ENCODE measurements at regions of chr1 and their contacts with region 1.

Region 1: DNA sequence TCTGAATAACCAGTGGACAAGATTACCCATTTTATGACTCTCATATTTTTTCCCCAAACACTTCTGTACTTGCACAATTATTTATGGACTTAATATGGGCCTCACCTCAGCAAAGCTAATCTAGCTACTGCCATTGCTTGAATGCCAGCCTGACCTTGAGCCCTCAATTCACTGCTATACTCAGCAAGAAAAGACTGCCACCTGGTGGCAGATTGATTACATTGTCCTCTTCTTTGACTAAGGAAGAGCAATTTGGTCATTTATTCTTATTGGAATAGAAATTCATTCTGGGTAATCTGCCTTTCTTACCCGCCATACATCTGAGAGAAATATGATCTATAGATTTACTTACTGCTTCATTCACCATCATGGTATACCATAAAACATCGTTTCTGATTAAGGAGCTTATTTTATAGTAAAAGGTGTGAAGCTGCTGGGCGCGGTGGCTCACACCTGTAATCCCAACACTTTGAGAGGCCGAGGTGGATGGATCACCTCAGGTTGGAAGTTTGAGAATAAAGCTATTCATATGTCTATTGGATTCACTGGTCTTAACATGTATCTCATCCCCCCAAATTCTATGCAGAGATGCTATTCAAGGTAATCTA is 32.9 kb upstream of the DIPK1A start:
- DNase-seq: peak; percentile 78 to 84 (median 80)
- H3K4me3 ChIP-seq: no peak overlapping the region
- H3K4me3 Mint-ChIP-seq: peak overlapping the region in 1 of 8 donors; percentile 80
- H3K27ac ChIP-seq: no peak overlapping the region
- H3K27ac Mint-ChIP-seq: peak overlapping the region; percentile 52 to 88 (median 77)
- H3K4me1 ChIP-seq: peaks cover 49% of the 10 kb centered on the region
- H3K4me1 Mint-ChIP-seq: peaks cover 36 to 50% (median 42%) of the 10 kb centered on the region in 4 donors
- H3K27me3 ChIP-seq: no peaks in the 10 kb centered on the region
- H3K27me3 Mint-ChIP-seq: no peaks in the 10 kb centered on the region

Region 2: GRCh38 chr1:92872719-92873118 is 121.5 kb before region 1 on chr1:
- CTCF ChIA-PET with region 1: interaction called, 20 read pairs
- POLR2A ChIA-PET with region 1: no interaction called
- intact Hi-C with region 1: no loop called
- DNase-seq: no peak
- H3K4me3 ChIP-seq: no peak overlapping the region
- H3K4me3 Mint-ChIP-seq: no peak overlapping the region
- H3K27ac ChIP-seq: no peak overlapping the region
- H3K27ac Mint-ChIP-seq: peak overlapping the region in 1 of 7 donors; percentile 41
- H3K4me1 ChIP-seq: peaks cover 16% of the 10 kb centered on the region
- H3K4me1 Mint-ChIP-seq: peaks cover 15 to 26% (median 21%) of the 10 kb centered on the region in 4 donors
- H3K27me3 ChIP-seq: no peaks in the 10 kb centered on the region
- H3K27me3 Mint-ChIP-seq: no peaks in the 10 kb centered on the region

Region 3: DNA sequence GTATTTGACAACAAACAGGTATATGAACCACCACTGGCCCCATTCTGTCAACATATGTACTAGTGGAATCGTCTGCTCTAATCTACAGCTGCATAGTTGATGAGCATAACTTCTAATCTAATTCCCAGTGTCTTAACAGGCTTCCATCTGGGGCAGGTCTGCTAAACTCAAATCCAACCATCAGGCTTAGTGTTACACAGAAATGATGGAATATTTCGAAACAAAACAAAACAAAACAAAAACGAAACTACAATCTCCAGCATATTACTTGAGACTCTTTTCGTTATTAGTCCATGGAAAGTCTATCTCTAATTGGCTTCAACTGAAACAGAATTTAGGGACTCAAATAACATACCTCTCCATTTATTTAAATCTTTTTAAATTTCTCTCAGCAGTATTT is 70.5 kb before region 1 on chr1:
- CTCF ChIA-PET with region 1: interaction called, 10 read pairs
- POLR2A ChIA-PET with region 1: no interaction called
- intact Hi-C with region 1: no loop called
- DNase-seq: no peak
- H3K4me3 ChIP-seq: no peak overlapping the region
- H3K4me3 Mint-ChIP-seq: no peak overlapping the region
- H3K27ac ChIP-seq: no peak overlapping the region
- H3K27ac Mint-ChIP-seq: no peak overlapping the region
- H3K4me1 ChIP-seq: no peaks in the 10 kb centered on the region
- H3K4me1 Mint-ChIP-seq: peaks cover 13 to 36% (median 20%) of the 10 kb centered on the region in 4 donors
- H3K27me3 ChIP-seq: no peaks in the 10 kb centered on the region
- H3K27me3 Mint-ChIP-seq: no peaks in the 10 kb centered on the region

Region 4: DNA sequence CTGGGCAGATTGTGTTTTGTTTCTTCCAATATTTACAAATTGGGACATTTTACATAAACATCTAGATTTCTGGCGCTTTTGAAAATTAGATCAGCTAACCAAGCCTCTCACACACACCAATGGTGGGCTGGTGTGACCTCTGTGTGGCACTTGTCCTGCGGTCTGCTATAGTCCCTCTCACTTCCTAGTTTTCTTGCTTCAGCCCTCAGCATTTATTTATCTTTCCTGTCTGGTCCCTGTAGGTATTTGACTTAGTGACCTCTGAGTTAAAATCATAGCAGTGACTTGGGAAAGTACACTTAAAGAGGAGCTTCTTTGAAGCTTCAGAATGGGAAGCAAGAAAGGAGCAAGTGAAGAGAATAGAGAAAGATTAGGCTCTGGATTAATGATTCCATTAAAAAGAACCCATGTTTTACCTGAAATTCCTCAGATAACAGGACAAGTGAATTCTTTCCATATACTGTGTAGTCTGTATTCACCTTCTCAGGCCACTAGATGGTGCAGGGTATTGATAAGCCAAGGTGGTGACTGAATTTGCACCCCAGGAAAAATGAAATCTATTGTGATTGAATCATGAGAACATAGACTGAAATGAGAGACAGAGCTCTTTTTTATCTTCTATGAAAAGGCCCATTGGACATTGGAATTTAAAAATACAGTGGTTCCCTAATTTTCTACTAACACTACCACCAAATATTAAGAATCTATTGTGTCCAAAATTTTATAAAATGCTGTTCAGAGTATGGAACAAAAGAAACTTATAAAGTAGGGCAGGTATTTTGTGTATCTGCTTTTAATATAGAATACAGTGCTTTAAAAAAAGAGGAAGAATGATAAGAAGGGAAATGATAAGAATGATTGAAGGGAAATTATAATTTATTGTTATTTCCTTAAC is 25.8 kb before region 1 on chr1:
- CTCF ChIA-PET with region 1: interaction called, 433 read pairs
- POLR2A ChIA-PET with region 1: interaction called, 138 read pairs
- intact Hi-C with region 1: loop called (anchors 1 kb)
- DNase-seq: peak in 4 of 5 donors; percentile 41 to 50 (median 46)
- H3K4me3 ChIP-seq: no peak overlapping the region
- H3K4me3 Mint-ChIP-seq: peak overlapping the region in 1 of 8 donors; percentile 57
- H3K27ac ChIP-seq: no peak overlapping the region
- H3K27ac Mint-ChIP-seq: peak overlapping the region; percentile 6 to 82 (median 49)
- H3K4me1 ChIP-seq: peaks cover 56% of the 10 kb centered on the region
- H3K4me1 Mint-ChIP-seq: peaks cover 16 to 32% (median 23%) of the 10 kb centered on the region in 4 donors
- H3K27me3 ChIP-seq: no peaks in the 10 kb centered on the region
- H3K27me3 Mint-ChIP-seq: no peaks in the 10 kb centered on the region

Region 5: GRCh38 chr1:93005252-93005598 is 11.0 kb after region 1 on chr1:
- CTCF ChIA-PET with region 1: interaction called, 21 read pairs
- POLR2A ChIA-PET with region 1: no interaction called
- intact Hi-C with region 1: no loop called
- DNase-seq: no peak
- H3K4me3 ChIP-seq: no peak overlapping the region
- H3K4me3 Mint-ChIP-seq: no peak overlapping the region
- H3K27ac ChIP-seq: no peak overlapping the region
- H3K27ac Mint-ChIP-seq: no peak overlapping the region
- H3K4me1 ChIP-seq: no peaks in the 10 kb centered on the region
- H3K4me1 Mint-ChIP-seq: peaks cover 0 to 3% (median 0%) of the 10 kb centered on the region in 4 donors
- H3K27me3 ChIP-seq: no peaks in the 10 kb centered on the region
- H3K27me3 Mint-ChIP-seq: peaks cover 10 to 11% of the 10 kb centered on the region in 2 donors